Body of pancreas (tissue), 4 donors: ENCODE measurements at regions of chr11 and their contacts with region 1.

Region 1: GRCh38 chr11:65700391-65700790 is 11.7 kb upstream of the KAT5 start:
- DNase-seq: no peak
- ATAC-seq: no peak
- H3K4me3 ChIP-seq: no peak overlapping the region
- H3K27ac ChIP-seq: no peak overlapping the region
- H3K4me1 ChIP-seq: peaks cover 9% of the 10 kb centered on the region
- H3K27me3 ChIP-seq: no peaks in the 10 kb centered on the region
- CTCF ChIP-seq: no peak
- POLR2A ChIP-seq: no peak

Region 2: GRCh38 chr11:65637794-65638317 is 62.5 kb before region 1 on chr11 and contains the start of gene SIPA1:
- intact Hi-C with region 1: no loop called
- DNase-seq: peak; percentile 77 to 86 (median 82)
- ATAC-seq: peak; percentile 91
- H3K4me3 ChIP-seq: peak within 1 kb of the TSS; percentile 30 to 51
- H3K27ac ChIP-seq: peak within 1 kb of the TSS; percentile 59 to 83 (median 74)
- H3K4me1 ChIP-seq: peaks cover 30% of the 10 kb centered on the region
- H3K27me3 ChIP-seq: no peaks in the 10 kb centered on the region
- CTCF ChIP-seq: peak in 5 of 7 experiments; percentile 9 to 48 (median 34)
- POLR2A ChIP-seq: peak; percentile 41 to 69 (median 65)
- total RNA-seq, gene SIPA1: 23.6 to 29.3 TPM

Region 3: GRCh38 chr11:65992056-65992455 is 291.7 kb after region 1 on chr11:
- intact Hi-C with region 1: loop called (anchors 5 kb)
- DNase-seq: no peak
- ATAC-seq: no peak
- H3K4me3 ChIP-seq: no peak overlapping the region
- H3K27ac ChIP-seq: no peak overlapping the region
- H3K4me1 ChIP-seq: peaks cover 5% of the 10 kb centered on the region
- H3K27me3 ChIP-seq: no peaks in the 10 kb centered on the region
- CTCF ChIP-seq: no peak
- POLR2A ChIP-seq: no peak